ENCODE measurements at regions of chr19 and their contacts with region 1.

Region 1: DNA sequence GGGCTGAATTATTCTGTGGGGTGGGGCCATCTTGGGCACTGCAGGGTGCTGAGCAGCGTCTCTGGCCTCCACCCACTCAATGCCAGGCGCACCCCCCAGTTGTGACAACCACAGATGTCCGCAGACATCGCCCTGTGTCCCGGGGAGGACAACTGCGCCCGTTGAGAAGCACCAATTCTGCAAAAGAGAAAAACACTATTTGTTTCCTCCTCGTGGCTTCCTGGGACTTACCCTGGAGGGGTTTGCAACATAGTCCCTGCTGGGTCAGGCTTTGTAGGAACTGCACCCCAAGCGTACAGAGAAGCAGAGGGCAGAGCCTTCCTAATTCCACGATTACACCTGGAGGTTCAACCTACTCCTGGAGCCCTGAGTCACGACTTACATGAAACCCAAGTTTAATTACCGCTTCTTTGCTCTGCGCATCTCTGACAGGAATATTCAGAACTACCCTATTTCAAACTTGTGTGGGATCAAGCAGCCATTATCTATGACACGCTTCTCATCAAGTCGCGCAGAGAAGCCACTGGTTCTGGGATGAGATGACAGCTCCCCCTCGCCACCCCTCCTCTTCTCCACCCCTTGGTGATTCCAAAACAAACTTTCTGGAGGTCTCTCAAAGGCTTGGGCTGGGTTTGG is 11.1 kb upstream of the SLC39A3 start:
- DNase-seq: no peak
- H3K4me3 ChIP-seq: no peak overlapping the region
- H3K4me3 Mint-ChIP-seq: no peak overlapping the region
- H3K27ac Mint-ChIP-seq: no peak overlapping the region
- H3K4me1 ChIP-seq: no peaks in the 10 kb centered on the region
- H3K4me1 Mint-ChIP-seq: no peaks in the 10 kb centered on the region
- H3K27me3 ChIP-seq: no peaks in the 10 kb centered on the region
- H3K27me3 Mint-ChIP-seq: no peaks in the 10 kb centered on the region
- CTCF ChIP-seq: no peak

Region 2: GRCh38 chr19:2648528-2648937 is 102.4 kb before region 1 on chr19:
- CTCF ChIA-PET with region 1: interaction called, 18 read pairs
- POLR2A ChIA-PET with region 1: no interaction called
- intact Hi-C with region 1: loop called (anchors 1 kb)
- DNase-seq: peak; percentile 72 to 83
- H3K4me3 ChIP-seq: no peak overlapping the region
- H3K4me3 Mint-ChIP-seq: no peak overlapping the region
- H3K27ac Mint-ChIP-seq: no peak overlapping the region
- H3K4me1 ChIP-seq: no peaks in the 10 kb centered on the region
- H3K4me1 Mint-ChIP-seq: no peaks in the 10 kb centered on the region
- H3K27me3 ChIP-seq: no peaks in the 10 kb centered on the region
- H3K27me3 Mint-ChIP-seq: peaks cover 12% of the 10 kb centered on the region
- CTCF ChIP-seq: peak; percentile 66 to 83

Region 3: GRCh38 chr19:2661615-2662014 is 89.3 kb before region 1 on chr19:
- CTCF ChIA-PET with region 1: interaction called, 17 read pairs
- POLR2A ChIA-PET with region 1: no interaction called
- intact Hi-C with region 1: no loop called
- DNase-seq: peak; percentile 62
- H3K4me3 ChIP-seq: no peak overlapping the region
- H3K4me3 Mint-ChIP-seq: no peak overlapping the region
- H3K27ac Mint-ChIP-seq: no peak overlapping the region
- H3K4me1 ChIP-seq: no peaks in the 10 kb centered on the region
- H3K4me1 Mint-ChIP-seq: no peaks in the 10 kb centered on the region
- H3K27me3 ChIP-seq: no peaks in the 10 kb centered on the region
- H3K27me3 Mint-ChIP-seq: no peaks in the 10 kb centered on the region
- CTCF ChIP-seq: peak; percentile 53 to 82

Region 4: DNA sequence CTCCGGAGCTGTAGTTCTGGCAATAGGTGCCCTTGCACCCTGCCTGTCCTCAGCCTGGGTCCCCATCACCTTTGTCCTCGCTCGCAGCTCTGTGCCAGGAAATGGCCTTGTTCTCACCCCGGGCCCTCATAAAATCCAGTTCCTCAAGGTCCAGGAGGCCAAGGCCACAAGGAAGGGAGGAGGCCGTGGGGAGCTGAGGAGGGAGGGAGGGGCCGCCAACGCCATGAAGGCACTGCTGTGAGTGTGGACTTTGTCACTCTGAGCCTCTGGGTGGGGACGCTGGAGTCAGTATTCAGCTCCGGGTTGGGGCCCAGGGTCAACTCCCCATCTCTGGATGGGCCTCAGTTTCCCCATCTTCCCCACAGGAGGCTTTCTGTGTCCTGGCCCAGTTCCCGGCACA is 334.0 kb after region 1 on chr19:
- CTCF ChIA-PET with region 1: no interaction called
- POLR2A ChIA-PET with region 1: no interaction called
- intact Hi-C with region 1: no loop called
- DNase-seq: peak in 1 of 2 experiments; percentile 78
- H3K4me3 ChIP-seq: no peak overlapping the region
- H3K4me3 Mint-ChIP-seq: no peak overlapping the region
- H3K27ac Mint-ChIP-seq: no peak overlapping the region
- H3K4me1 ChIP-seq: peaks cover 26% of the 10 kb centered on the region
- H3K4me1 Mint-ChIP-seq: no peaks in the 10 kb centered on the region
- H3K27me3 ChIP-seq: no peaks in the 10 kb centered on the region
- H3K27me3 Mint-ChIP-seq: no peaks in the 10 kb centered on the region
- CTCF ChIP-seq: no peak

Measured in Caco-2 (cell line).